AG04449 (cell line): ENCODE measurements at regions of chr2 and their contacts with region 1.

Region 1: GRCh38 chr2:131673392-131674173 is 145.9 kb downstream of the CCDC74A start:
- DNase-seq: no peak
- H3K4me3 ChIP-seq: peak overlapping the region; percentile 44
- CTCF ChIP-seq: peak; percentile 86

Region 2: DNA sequence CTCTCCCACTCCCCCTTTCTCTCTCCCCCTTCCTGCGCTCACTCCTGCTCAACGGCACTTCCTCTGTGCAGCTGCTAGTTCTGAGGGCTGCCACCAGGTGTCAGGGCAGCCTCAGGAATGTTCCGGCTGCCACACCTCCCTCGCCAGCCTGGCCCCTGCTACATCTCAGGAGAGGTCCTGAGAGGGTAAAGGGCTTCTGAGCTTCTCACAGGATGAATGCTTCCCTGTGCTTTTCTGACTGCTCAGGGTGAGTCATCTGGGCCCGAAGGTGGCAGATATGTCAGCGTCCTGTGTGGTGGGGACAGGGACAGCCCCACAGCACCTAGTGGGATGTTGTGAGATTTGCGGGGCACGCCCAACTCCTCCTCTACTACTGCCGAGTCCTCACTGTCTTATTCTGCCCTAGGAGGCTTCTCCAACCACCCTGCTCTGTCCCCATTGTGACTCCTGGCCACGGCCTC is 519.5 kb before region 1 on chr2:
- CTCF ChIA-PET with region 1: interaction called, 22 read pairs
- POLR2A ChIA-PET with region 1: no interaction called
- DNase-seq: no peak
- H3K4me3 ChIP-seq: no peak overlapping the region
- CTCF ChIP-seq: peak; percentile 92

Region 3: DNA sequence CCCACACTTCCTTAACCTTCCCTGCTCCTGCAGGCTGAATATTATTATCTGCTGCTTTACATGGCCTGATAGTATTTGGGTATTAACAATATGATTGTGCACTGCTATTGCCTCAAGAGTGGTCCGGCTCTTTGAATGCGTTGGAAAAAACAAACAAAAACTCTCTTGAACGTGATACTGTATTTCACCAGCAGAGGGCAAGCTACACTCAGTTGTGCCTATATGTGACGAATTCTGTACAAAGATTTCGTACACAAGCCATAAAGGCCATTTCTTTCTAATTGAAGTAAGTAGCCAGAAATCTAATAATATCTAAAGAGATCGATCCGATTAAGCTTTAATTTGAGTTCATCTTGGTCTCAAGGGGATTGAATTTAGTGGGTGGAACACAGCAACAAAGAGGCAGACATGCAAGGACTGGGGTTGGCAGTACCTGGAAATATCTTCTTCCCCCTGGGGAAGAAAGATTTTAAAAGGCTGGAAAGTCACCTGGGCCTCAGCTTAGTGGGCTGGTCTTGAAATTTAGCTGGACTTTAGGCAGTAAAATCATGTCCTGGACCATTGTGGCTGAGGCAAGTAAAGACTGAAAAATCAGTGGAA is 260.3 kb before region 1 on chr2:
- CTCF ChIA-PET with region 1: interaction called, 40 read pairs
- POLR2A ChIA-PET with region 1: no interaction called
- DNase-seq: peak; percentile 10
- H3K4me3 ChIP-seq: no peak overlapping the region
- CTCF ChIP-seq: peak; percentile 56

Region 4: GRCh38 chr2:131659168-131659572 is 14.4 kb before region 1 on chr2:
- CTCF ChIA-PET with region 1: interaction called, 19 read pairs
- POLR2A ChIA-PET with region 1: interaction called, 3 read pairs
- DNase-seq: no peak
- H3K4me3 ChIP-seq: no peak overlapping the region
- CTCF ChIP-seq: no peak

Region 5: DNA sequence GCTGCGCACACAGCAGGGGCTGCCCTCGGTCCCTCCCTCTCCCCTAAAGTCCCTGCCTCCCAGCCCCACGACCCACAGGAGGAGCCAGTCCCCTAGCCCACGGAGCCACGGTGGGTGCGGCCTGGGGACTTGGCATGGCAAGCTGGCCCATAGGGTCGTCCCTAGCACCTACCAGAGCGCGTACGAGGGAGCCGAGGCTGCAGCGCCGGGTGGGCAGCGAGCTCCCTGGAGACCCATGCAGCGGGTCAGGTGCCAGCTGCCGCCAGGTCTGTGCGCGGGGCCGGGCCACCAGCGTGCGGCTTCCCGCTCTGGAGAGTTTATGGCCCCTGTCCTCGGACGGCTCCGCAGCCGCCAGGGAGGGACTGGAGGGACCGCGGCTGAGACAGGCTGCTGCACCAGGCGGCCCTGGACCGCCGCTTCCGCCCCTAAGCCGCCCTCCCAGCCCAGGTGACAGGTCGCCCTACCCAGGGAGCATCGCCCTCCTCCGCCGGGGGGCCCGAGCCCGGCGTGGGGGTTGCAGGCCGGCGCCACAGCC is 127.7 kb after region 1 on chr2:
- CTCF ChIA-PET with region 1: interaction called, 30 read pairs
- POLR2A ChIA-PET with region 1: no interaction called
- DNase-seq: no peak
- H3K4me3 ChIP-seq: no peak overlapping the region
- CTCF ChIP-seq: no peak